GM12878 (cell line): ENCODE measurements at regions of chr1 and their contacts with region 1.

Region 1: DNA sequence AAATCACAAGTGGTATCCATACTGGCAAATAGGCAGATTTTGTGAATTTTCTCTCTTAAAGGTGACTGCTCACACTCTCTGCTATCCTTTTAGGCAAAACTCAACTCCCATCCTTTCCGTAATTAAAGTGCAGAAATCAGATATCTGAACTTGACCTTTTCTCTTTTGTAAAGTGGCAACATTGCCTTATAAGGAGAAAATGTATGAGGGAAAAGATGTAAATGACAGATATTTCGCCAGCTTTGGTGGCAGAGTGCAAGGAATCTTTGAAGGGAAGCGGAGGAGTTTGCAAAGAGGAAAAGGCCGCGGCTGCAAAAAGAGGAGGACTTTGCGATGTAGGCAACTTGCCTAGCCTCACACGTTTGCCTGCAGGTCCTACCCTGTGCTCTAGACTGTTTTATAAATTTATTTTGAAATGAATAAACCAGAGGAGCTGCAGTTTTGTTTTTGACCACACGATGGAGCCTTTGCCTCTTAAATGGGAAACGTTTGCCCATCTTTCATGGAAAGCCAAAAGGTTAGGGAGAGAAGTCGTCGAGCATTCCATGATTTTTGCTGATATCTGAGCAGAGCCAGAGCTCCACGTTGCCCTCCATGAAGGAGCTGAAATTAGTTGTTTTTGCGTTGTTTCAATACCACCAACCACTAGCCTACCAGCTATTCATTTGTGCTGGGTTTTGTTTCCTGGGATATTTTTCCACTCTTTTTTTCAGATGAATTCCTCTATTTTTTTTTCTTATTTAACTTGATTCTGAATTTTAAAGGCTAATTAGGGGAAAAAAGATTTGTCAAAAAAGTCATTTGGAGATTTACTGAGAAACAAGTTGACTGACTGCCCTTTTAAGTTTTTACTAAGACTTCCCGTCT is 242.3 kb downstream of the LMX1A start:
- DNase-seq: no peak
- ATAC-seq: peak; percentile 31; the same call in 1 of the 3 replicates
- H3K4me3 ChIP-seq: no peak overlapping the region
- H3K27ac ChIP-seq: no peak overlapping the region
- H3K4me1 ChIP-seq: no peaks in the 10 kb centered on the region
- H3K27me3 ChIP-seq: peaks cover 3 to 6% of the 10 kb centered on the region in 2 experiments; a peak in 2 of 4 replicates
- CTCF ChIP-seq: peak; percentile 54 to 70 (median 68); a peak in 5 of 6 replicates
- EP300 ChIP-seq: no peak
- POLR2A ChIP-seq: no peak
- RAD21 ChIP-seq: peak; percentile 57

Region 2: DNA sequence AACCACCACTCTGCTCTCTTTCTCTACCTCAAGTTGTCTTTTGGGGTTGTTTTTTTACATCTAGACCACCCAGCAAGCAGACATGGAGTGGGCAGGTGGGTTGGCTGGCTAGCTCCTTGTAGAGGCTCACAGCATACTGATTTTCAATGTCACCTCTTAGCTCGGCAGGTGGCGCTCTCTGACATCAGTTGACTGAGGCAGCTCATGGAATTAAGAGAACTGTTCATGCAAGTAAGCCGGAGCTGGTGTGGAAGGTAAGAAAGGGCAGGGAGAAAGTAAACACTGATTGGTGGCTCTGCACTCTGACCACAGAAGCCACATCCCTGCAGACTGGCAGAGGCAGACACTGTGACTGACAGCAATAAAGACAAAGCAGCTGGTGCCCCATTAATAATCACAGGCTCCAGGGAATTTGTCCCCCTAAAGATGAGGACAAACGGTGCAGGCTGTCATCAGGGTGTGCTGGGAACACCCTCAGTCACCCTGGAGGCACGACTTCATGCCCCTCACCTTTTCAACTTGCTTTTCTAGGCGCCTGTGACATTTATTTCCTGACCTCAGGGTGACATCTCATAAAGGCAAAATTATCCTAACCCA is 15.4 kb after region 1 on chr1:
- CTCF ChIA-PET with region 1: interaction called, 25 read pairs
- POLR2A ChIA-PET with region 1: no interaction called
- RAD21 ChIA-PET with region 1: interaction called, 4 read pairs
- SMC1A ChIA-PET with region 1: interaction called, 3 read pairs
- in situ Hi-C with region 1: no loop called
- intact Hi-C with region 1: no loop called
- DNase-seq: no peak
- ATAC-seq: peak; percentile 89
- H3K4me3 ChIP-seq: no peak overlapping the region
- H3K27ac ChIP-seq: no peak overlapping the region
- H3K4me1 ChIP-seq: no peaks in the 10 kb centered on the region
- H3K27me3 ChIP-seq: no peaks in the 10 kb centered on the region; a peak in 1 of 4 replicates
- CTCF ChIP-seq: peak; percentile 65 to 69 (median 68)
- EP300 ChIP-seq: no peak
- POLR2A ChIP-seq: no peak
- RAD21 ChIP-seq: peak; percentile 40

Region 3: GRCh38 chr1:165144757-165145397 is 30.6 kb after region 1 on chr1:
- CTCF ChIA-PET with region 1: interaction called, 14 read pairs
- POLR2A ChIA-PET with region 1: no interaction called
- RAD21 ChIA-PET with region 1: no interaction called
- SMC1A ChIA-PET with region 1: no interaction called
- in situ Hi-C with region 1: no loop called
- intact Hi-C with region 1: no loop called
- DNase-seq: no peak
- ATAC-seq: peak; percentile 94
- H3K4me3 ChIP-seq: no peak overlapping the region
- H3K27ac ChIP-seq: no peak overlapping the region
- H3K4me1 ChIP-seq: no peaks in the 10 kb centered on the region
- H3K27me3 ChIP-seq: no peaks in the 10 kb centered on the region; a peak in 1 of 4 replicates
- CTCF ChIP-seq: peak; percentile 73 to 82 (median 81)
- EP300 ChIP-seq: no peak
- POLR2A ChIP-seq: no peak
- RAD21 ChIP-seq: peak; percentile 49